Activated CD8-positive, alpha-beta T cell treated with anti-CD3 and anti-CD28 coated beads for 36 hours (primary cell): ENCODE measurements at regions of chr11 and their contacts with region 1.

Region 1: GRCh38 chr11:114180301-114181055 is 115.7 kb upstream of the NNMT start:
- DNase-seq: peak; percentile 55
- ATAC-seq: no peak
- H3K4me3 Mint-ChIP-seq: no peak overlapping the region
- H3K27ac Mint-ChIP-seq: no peak overlapping the region
- H3K4me1 Mint-ChIP-seq: peaks cover 54% of the 10 kb centered on the region
- H3K27me3 Mint-ChIP-seq: no peaks in the 10 kb centered on the region
- CTCF ChIP-seq: peak; percentile 39

Region 2: GRCh38 chr11:113806406-113806805 is 374.1 kb before region 1 on chr11:
- CTCF ChIA-PET with region 1: no interaction called
- POLR2A ChIA-PET with region 1: no interaction called
- intact Hi-C with region 1: no loop called
- DNase-seq: peak; percentile 17
- ATAC-seq: no peak
- H3K4me3 Mint-ChIP-seq: no peak overlapping the region
- H3K27ac Mint-ChIP-seq: no peak overlapping the region
- H3K4me1 Mint-ChIP-seq: no peaks in the 10 kb centered on the region
- H3K27me3 Mint-ChIP-seq: no peaks in the 10 kb centered on the region
- CTCF ChIP-seq: no peak

Region 3: DNA sequence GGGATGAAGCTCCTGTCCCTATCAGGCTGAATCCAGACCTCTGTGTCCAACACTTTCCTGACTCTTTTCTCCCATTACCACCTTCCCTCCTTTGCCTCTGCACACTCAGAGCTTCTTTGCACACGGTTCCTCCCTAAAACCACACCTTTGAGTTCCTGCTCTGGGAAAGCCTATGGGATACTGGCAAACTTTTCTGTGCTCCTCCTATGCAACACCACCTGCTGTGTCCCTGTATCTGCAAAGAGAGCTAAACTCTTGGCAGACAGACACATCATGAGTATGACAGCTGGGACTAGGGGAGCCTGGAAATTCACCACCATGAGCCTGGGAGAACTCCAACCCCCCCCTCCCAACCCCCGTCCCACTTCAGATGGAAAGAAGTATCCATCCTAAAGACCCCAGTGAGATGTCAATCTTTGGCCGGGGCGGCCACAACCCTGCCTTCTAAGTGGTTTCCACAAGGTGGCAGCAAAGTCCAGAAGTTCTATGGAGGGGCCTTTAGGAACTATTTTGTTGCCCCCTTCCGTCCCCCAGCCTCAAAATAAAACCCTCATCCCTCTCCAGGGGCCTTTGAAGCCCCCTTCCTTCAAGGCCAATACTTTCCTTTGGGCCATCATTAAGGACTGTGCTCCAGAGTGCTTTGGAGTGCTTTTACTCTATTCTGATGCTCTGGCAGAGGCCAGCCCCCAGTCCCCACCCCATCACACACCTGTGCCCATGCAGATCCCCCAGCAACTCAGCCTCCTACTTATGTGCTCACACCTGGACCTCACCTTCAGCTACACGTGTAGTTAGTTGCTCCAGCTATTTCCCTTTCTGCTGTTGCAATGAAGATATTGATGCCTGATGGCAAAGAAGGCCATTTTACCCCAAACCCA is 186.2 kb before region 1 on chr11:
- CTCF ChIA-PET with region 1: interaction called, 12 read pairs
- POLR2A ChIA-PET with region 1: no interaction called
- intact Hi-C with region 1: no loop called
- DNase-seq: peak; percentile 40
- ATAC-seq: no peak
- H3K4me3 Mint-ChIP-seq: no peak overlapping the region
- H3K27ac Mint-ChIP-seq: no peak overlapping the region
- H3K4me1 Mint-ChIP-seq: no peaks in the 10 kb centered on the region
- H3K27me3 Mint-ChIP-seq: peaks cover 24% of the 10 kb centered on the region
- CTCF ChIP-seq: peak; percentile 71

Region 4: GRCh38 chr11:114159802-114160632 is 20.5 kb before region 1 on chr11:
- CTCF ChIA-PET with region 1: interaction called, 11 read pairs
- POLR2A ChIA-PET with region 1: interaction called, 3 read pairs
- intact Hi-C with region 1: no loop called
- DNase-seq: peak; percentile 97
- ATAC-seq: peak; percentile 85
- H3K4me3 Mint-ChIP-seq: peak overlapping the region; percentile 47
- H3K27ac Mint-ChIP-seq: peak overlapping the region; percentile 55
- H3K4me1 Mint-ChIP-seq: peaks cover 63% of the 10 kb centered on the region
- H3K27me3 Mint-ChIP-seq: no peaks in the 10 kb centered on the region
- CTCF ChIP-seq: no peak

Region 5: DNA sequence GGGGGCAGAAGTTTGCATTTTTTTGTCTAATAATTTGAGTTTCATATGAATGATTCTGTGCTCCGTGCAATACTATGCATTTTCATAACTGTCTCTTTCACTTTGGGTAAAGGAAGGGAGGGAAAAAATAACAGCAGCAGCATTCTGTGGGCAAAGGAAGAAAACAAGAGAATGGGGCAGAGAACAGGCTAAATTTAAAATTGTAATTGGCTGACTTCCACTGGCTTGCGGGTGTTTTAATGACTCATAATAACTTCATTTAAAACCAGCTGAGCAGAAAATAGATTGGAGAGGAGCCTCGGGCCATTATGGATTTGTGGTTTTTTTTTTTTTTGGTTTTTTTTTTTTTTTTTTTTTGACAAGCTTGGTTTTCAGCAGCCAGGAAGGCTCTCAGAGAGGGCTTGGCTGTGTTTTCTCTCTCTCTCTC is 13.6 kb before region 1 on chr11:
- CTCF ChIA-PET with region 1: interaction called, 58 read pairs
- POLR2A ChIA-PET with region 1: interaction called, 5 read pairs
- intact Hi-C with region 1: no loop called
- DNase-seq: peak; percentile 29
- ATAC-seq: peak; percentile 66
- H3K4me3 Mint-ChIP-seq: peak overlapping the region; percentile 16
- H3K27ac Mint-ChIP-seq: peak overlapping the region; percentile 75
- H3K4me1 Mint-ChIP-seq: peaks cover 81% of the 10 kb centered on the region
- H3K27me3 Mint-ChIP-seq: no peaks in the 10 kb centered on the region
- CTCF ChIP-seq: no peak

Region 6: GRCh38 chr11:114192841-114193389 is 12.4 kb after region 1 on chr11:
- CTCF ChIA-PET with region 1: interaction called, 6 read pairs
- POLR2A ChIA-PET with region 1: interaction called, 13 read pairs
- intact Hi-C with region 1: no loop called
- DNase-seq: no peak
- ATAC-seq: no peak
- H3K4me3 Mint-ChIP-seq: no peak overlapping the region
- H3K27ac Mint-ChIP-seq: no peak overlapping the region
- H3K4me1 Mint-ChIP-seq: peaks cover 9% of the 10 kb centered on the region
- H3K27me3 Mint-ChIP-seq: no peaks in the 10 kb centered on the region
- CTCF ChIP-seq: no peak